PC-3 (cell line): ENCODE measurements at regions of chr7 and their contacts with region 1.

Region 1: DNA sequence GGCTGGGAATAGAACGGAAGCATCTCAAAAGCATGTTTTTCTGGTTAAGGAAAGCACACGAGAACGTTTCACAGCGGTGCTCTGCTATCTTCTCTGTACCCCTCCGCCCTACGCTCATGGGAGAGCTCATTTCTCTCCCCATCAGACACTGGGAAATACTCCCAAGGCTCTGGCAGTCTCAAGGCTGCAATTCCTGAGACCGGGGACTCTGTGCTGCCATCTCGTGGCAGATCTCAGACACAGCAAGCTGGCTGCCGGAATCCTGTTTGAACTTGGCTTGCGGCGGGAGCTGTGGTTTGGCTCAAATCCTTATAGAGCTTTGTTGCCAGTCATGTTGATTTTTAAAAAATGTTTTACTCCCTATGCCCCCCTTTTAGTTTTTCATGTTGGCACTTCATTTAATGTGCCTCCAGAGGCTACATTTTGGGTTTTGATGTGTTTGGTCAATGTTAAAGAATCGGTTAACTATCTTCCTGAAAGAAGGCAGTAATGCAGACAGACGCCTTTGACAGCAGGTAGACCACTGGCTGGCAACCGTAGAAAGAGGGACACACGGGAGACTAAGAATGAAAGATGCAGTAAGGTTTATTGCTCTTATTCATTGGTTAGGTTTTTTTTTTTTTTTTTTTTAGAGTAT is 27.6 kb downstream of the BMPER start:
- DNase-seq: peak; percentile 89
- ATAC-seq: peak; percentile 84
- H3K4me3 ChIP-seq: peak overlapping the region; percentile 48
- H3K27ac ChIP-seq: peak overlapping the region; percentile 51
- H3K4me1 ChIP-seq: peaks cover 21% of the 10 kb centered on the region
- H3K27me3 ChIP-seq: 0 out of 2 replicates have a peak, but pooled peaks cover 3% of the 10 kb centered on the region
- CTCF ChIP-seq: peak; percentile 90

Region 2: GRCh38 chr7:33757562-33758165 is 175.3 kb before region 1 on chr7:
- CTCF ChIA-PET with region 1: no interaction called
- POLR2A ChIA-PET with region 1: no interaction called
- intact Hi-C with region 1: loop called (anchors 1 kb)
- DNase-seq: peak; percentile 72
- ATAC-seq: peak; percentile 49; the same call in 1 of the 2 replicates
- H3K4me3 ChIP-seq: no peak overlapping the region
- H3K27ac ChIP-seq: no peak overlapping the region
- H3K4me1 ChIP-seq: no peaks in the 10 kb centered on the region; the same call in 1 of the 2 replicates
- H3K27me3 ChIP-seq: no peaks in the 10 kb centered on the region
- CTCF ChIP-seq: peak; percentile 66

Region 3: DNA sequence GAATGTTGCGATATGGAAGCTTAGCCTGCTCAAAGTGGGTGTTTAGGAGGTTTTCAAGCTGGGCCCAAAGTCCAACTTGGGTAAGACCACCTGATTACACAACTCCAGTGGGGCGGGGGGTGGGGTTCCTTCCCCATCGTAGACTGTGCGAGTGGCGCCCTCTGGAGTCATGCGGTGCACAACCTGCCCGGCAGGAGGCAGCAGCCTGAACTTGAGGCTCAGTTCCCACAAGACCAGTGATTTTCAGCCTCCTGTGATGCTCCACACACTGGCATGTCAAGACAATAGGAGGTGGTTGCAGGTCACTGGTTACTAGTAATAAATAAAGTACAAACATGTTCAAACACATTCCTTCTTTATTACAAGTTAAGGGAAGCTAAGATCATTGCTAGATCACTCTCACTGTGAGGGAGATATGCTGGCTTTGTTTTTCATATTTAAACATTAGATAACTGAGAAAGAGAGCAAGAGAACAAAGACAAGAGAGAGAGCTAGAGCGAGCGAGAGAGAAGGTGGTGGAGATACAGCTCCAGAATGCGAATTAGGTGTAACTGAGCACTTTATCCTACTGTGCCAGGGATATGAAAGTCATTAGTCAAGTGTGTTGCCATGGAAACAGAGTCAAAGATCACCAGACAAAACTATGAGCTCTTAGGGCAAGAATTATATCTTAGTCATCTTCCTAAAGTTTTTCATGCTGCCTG is 125.0 kb before region 1 on chr7:
- CTCF ChIA-PET with region 1: no interaction called
- POLR2A ChIA-PET with region 1: no interaction called
- intact Hi-C with region 1: no loop called
- DNase-seq: peak; percentile 67
- ATAC-seq: peak; percentile 65
- H3K4me3 ChIP-seq: no peak overlapping the region
- H3K27ac ChIP-seq: peak overlapping the region; percentile 80
- H3K4me1 ChIP-seq: peaks cover 27% of the 10 kb centered on the region
- H3K27me3 ChIP-seq: no peaks in the 10 kb centered on the region
- CTCF ChIP-seq: peak; percentile 86

Region 4: DNA sequence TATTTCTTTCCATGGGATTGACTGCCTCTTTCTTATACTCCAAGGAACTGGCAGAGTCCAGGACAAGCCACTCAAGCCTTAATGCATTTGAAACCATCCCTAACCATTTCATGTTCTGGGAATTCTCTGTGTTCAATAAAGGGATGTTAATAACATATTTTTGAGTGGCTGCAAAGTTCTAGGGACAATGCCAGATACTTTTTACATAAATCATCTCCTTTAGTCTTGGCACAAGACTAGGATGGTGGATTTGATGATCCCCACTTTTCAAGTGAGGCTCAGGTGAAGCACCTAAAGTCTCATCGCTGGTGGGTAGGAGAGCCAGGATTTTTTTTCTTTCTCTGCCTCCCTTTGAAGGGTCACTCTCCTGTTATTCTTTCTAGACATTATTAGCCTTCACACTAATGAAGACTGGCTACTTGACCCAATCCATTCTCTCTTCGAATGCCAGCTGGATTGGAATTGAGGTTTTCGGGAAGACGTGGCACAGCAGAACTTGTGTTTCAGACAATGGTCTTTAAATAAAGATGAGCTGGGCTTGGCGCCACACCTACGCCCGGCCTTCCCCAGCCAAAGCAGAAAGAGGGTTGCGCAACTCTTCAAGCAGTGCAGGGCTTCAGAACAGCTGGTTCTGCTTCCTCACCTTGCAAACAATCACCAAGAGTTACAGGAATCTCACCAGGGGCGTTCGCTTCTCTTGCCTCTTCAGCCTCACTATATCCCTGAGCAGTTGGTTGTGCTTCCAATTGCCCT is 101.4 kb before region 1 on chr7:
- CTCF ChIA-PET with region 1: no interaction called
- POLR2A ChIA-PET with region 1: no interaction called
- intact Hi-C with region 1: no loop called
- DNase-seq: peak; percentile 32
- ATAC-seq: no peak
- H3K4me3 ChIP-seq: no peak overlapping the region
- H3K27ac ChIP-seq: no peak overlapping the region
- H3K4me1 ChIP-seq: no peaks in the 10 kb centered on the region; the same call in 1 of the 2 replicates
- H3K27me3 ChIP-seq: no peaks in the 10 kb centered on the region
- CTCF ChIP-seq: no peak

Region 5: GRCh38 chr7:33895025-33895804 is 37.7 kb before region 1 on chr7:
- CTCF ChIA-PET with region 1: interaction called, 17 read pairs
- POLR2A ChIA-PET with region 1: no interaction called
- intact Hi-C with region 1: no loop called
- DNase-seq: peak; percentile 79
- ATAC-seq: peak; percentile 97
- H3K4me3 ChIP-seq: no peak overlapping the region
- H3K27ac ChIP-seq: no peak overlapping the region
- H3K4me1 ChIP-seq: peaks cover 11% of the 10 kb centered on the region; the same call in 1 of the 2 replicates
- H3K27me3 ChIP-seq: 0 out of 2 replicates have a peak, but pooled peaks cover 4% of the 10 kb centered on the region
- CTCF ChIP-seq: peak; percentile 85